ENCODE measurements at regions of chr14 and their contacts with region 1.

Region 1: GRCh38 chr14:55430024-55430690 is 10.3 kb downstream of the TBPL2 start:
- DNase-seq: peak; percentile 32
- H3K4me3 ChIP-seq: no peak overlapping the region
- H3K27me3 ChIP-seq: 0 out of 2 replicates have a peak, but pooled peaks cover 2% of the 10 kb centered on the region
- CTCF ChIP-seq: peak; percentile 55

Region 2: DNA sequence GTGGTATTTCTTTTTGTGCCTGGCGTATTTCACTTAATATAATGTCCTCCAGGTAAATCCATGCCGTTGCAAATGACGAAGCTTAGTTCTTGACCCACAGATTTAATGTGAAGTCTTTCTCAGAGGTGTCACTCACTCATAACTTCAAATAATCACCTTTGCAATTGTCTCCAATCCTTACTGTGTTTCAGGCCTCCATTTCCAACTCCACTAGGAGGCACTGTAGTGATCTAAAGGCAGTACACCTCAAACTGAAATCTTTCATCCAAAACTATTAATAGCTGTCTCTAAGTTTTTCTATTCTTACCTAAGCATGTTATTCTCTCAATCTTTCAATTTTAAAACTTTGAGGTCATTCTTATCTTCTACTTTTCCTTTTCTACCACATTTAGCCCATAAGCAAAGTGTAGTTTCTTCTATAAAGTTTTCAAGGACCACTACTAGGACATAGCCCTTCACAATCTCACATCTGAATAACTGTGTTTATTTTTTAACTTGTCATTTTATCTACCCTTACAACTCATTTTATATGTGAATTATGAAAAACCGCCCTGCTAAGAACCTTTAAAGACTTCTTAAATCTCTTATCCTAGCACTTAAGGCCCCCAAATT is 184.4 kb before region 1 on chr14:
- CTCF ChIA-PET with region 1: interaction called, 10 read pairs
- POLR2A ChIA-PET with region 1: no interaction called
- DNase-seq: no peak
- H3K4me3 ChIP-seq: no peak overlapping the region
- H3K27me3 ChIP-seq: peaks cover 8% of the 10 kb centered on the region
- CTCF ChIP-seq: peak; percentile 84

Region 3: GRCh38 chr14:55270832-55271565 is 159.2 kb before region 1 on chr14 and contains the start of gene FBXO34:
- CTCF ChIA-PET with region 1: interaction called, 10 read pairs
- POLR2A ChIA-PET with region 1: no interaction called
- DNase-seq: peak; percentile 63
- H3K4me3 ChIP-seq: peak within 1 kb of the TSS; percentile 90
- H3K27me3 ChIP-seq: no peaks in the 10 kb centered on the region; the same call in 1 of the 2 replicates
- CTCF ChIP-seq: peak; percentile 100
- polyA plus RNA-seq, gene FBXO34: 15.0 and 16.9 TPM in 2 replicates

Region 4: GRCh38 chr14:55416866-55417265 is 13.3 kb before region 1 on chr14:
- CTCF ChIA-PET with region 1: interaction called, 20 read pairs
- POLR2A ChIA-PET with region 1: no interaction called
- DNase-seq: no peak
- H3K4me3 ChIP-seq: no peak overlapping the region
- H3K27me3 ChIP-seq: peaks cover 1% of the 10 kb centered on the region; the same call in 1 of the 2 replicates
- CTCF ChIP-seq: peak; percentile 28

Region 5: DNA sequence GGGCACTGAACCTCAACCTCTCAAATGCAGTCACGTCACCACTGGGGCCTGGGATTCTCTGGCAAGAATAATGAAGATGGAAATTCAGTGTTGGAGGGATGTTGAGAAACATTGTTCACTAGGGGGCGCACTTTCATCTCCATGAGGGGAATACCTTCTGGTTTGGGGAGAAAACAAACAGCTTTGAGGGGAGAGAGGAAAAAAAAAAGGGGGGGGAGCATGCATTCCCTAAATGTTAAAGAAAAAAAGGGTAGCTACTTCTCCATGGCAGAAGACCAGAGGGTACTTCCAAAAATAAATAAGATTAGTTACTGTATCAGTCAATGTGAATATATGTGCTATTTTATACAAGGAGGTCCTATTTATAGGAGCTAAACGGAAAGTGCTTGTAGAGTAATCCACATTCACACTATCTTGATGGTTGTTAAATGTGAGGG is 16.1 kb after region 1 on chr14:
- CTCF ChIA-PET with region 1: interaction called, 71 read pairs
- POLR2A ChIA-PET with region 1: no interaction called
- DNase-seq: no peak
- H3K4me3 ChIP-seq: no peak overlapping the region
- H3K27me3 ChIP-seq: no peaks in the 10 kb centered on the region
- CTCF ChIP-seq: peak; percentile 69

Measured in BJ (cell line).